Natural killer cell (primary cell): ENCODE measurements at regions of chr1 and their contacts with region 1.

Region 1: DNA sequence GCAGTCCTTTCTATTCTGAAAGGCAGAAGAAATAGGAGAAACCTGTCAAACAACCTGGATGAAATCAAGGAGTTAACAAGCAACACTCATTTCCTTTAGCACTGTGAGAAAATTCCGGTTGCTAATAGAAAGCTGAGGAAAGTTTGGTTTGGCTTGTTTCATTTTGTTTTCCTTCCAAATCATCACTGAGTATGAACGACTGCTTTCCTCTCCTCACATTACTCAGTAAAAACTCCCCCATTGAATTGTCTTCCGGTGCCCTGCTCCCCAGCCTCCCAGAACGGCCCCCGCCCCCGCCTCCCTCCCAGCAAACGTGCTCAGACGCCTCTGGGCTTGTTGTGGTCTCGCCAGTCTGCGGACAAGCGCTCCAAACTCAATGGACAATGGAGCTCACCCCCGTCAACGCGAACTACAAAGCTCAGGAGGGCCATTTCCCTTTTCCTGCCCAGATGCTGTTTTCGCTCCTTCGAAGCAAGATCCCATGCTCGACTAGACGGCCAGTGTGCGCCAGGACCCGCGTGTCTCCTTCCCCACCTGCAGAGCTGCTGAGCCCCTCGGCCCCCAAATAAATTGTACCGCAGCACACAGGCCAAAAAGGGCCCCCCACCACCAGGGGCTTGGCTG is 747 bp downstream of the STX6 start:
- DNase-seq: peak; percentile 41 to 77
- ATAC-seq: peak; percentile 42 to 55 (median 54)
- H3K4me3 ChIP-seq: peak overlapping the region; percentile 76
- H3K4me3 Mint-ChIP-seq: peak overlapping the region; percentile 97
- H3K27ac ChIP-seq: peak overlapping the region; percentile 59
- H3K27ac Mint-ChIP-seq: peak overlapping the region; percentile 98 to 99
- H3K4me1 ChIP-seq: peaks cover 7% of the 10 kb centered on the region
- H3K4me1 Mint-ChIP-seq: peaks cover 47 to 48% of the 10 kb centered on the region in 2 donors
- H3K27me3 ChIP-seq: no peaks in the 10 kb centered on the region
- H3K27me3 Mint-ChIP-seq: peaks cover 0 to 9% of the 10 kb centered on the region in 2 donors
- CTCF ChIP-seq: no peak

Region 2: GRCh38 chr1:180631766-180632325 is 390.1 kb before region 1 on chr1 and contains the start of gene XPR1:
- intact Hi-C with region 1: loop called (anchors 5 kb)
- DNase-seq: peak; percentile 88 to 100
- ATAC-seq: peak; percentile 95 to 100 (median 96)
- H3K4me3 ChIP-seq: peak within 1 kb of the TSS; percentile 95
- H3K4me3 Mint-ChIP-seq: no peak within 1 kb of the TSS
- H3K27ac ChIP-seq: peak within 1 kb of the TSS; percentile 92
- H3K27ac Mint-ChIP-seq: no peak within 1 kb of the TSS
- H3K4me1 ChIP-seq: peaks cover 3% of the 10 kb centered on the region
- H3K4me1 Mint-ChIP-seq: peaks cover 0 to 14% of the 10 kb centered on the region in 2 donors
- H3K27me3 ChIP-seq: no peaks in the 10 kb centered on the region
- H3K27me3 Mint-ChIP-seq: peaks cover 8 to 9% of the 10 kb centered on the region in 2 donors
- CTCF ChIP-seq: no peak
- total RNA-seq, gene XPR1: 14.8 to 18.2 (median 16.7) TPM

Region 3: GRCh38 chr1:181033799-181034451 is 12.0 kb after region 1 on chr1 and contains the start of gene MR1:
- intact Hi-C with region 1: loop called (anchors 1 kb)
- DNase-seq: peak in 1 of 2 donors; percentile 91
- ATAC-seq: peak; percentile 95 to 98 (median 97)
- H3K4me3 ChIP-seq: peak within 1 kb of the TSS; percentile 85
- H3K4me3 Mint-ChIP-seq: peak within 1 kb of the TSS; percentile 98
- H3K27ac ChIP-seq: peak within 1 kb of the TSS; percentile 96
- H3K27ac Mint-ChIP-seq: peak within 1 kb of the TSS; percentile 98 to 100
- H3K4me1 ChIP-seq: peaks cover 29% of the 10 kb centered on the region
- H3K4me1 Mint-ChIP-seq: peaks cover 60 to 66% of the 10 kb centered on the region in 2 donors
- H3K27me3 ChIP-seq: no peaks in the 10 kb centered on the region
- H3K27me3 Mint-ChIP-seq: no peaks in the 10 kb centered on the region
- CTCF ChIP-seq: no peak
- total RNA-seq, gene MR1: 27.8 to 35.3 (median 34.6) TPM

Region 4: DNA sequence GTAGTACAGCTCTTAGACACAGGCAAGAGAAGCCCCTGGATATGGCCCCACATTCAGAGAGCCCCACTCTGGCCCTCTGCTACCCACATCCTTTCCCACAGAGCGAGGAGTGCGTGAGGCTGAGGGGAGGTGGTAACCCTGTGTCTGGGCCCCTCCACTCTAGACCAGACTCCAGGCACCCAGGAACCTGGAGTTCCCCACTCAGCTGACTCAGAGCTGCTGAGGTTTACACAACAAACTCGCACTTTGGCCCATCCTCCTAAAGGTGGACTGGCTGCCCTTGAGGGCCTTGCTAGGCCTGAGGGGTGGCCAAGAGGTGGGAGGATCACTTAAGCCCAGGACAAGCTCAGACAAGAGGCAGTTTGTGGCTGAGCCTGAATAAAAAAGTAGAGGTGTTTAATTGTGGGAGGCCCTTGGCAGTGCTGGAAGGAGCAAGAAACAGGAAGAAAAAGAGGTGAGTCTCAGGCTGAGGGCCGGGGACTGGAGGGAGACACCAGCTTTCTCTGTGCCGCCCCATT is 22.6 kb after region 1 on chr1:
- intact Hi-C with region 1: no loop called
- DNase-seq: peak; percentile 69 to 73
- ATAC-seq: peak; percentile 90 to 97 (median 95)
- H3K4me3 ChIP-seq: no peak overlapping the region
- H3K4me3 Mint-ChIP-seq: peak overlapping the region; percentile 81
- H3K27ac ChIP-seq: peak overlapping the region; percentile 78
- H3K27ac Mint-ChIP-seq: peak overlapping the region; percentile 90 to 97
- H3K4me1 ChIP-seq: peaks cover 31% of the 10 kb centered on the region
- H3K4me1 Mint-ChIP-seq: peaks cover 45 to 46% of the 10 kb centered on the region in 2 donors
- H3K27me3 ChIP-seq: no peaks in the 10 kb centered on the region
- H3K27me3 Mint-ChIP-seq: no peaks in the 10 kb centered on the region
- CTCF ChIP-seq: no peak

Region 5: GRCh38 chr1:181062836-181063428 is 41.0 kb after region 1 on chr1:
- intact Hi-C with region 1: loop called (anchors 2 kb)
- DNase-seq: peak; percentile 37 to 58
- ATAC-seq: peak; percentile 91 to 93 (median 92)
- H3K4me3 ChIP-seq: peak overlapping the region; percentile 35
- H3K4me3 Mint-ChIP-seq: peak overlapping the region; percentile 87
- H3K27ac ChIP-seq: peak overlapping the region; percentile 92
- H3K27ac Mint-ChIP-seq: peak overlapping the region; percentile 91 to 98
- H3K4me1 ChIP-seq: peaks cover 17% of the 10 kb centered on the region
- H3K4me1 Mint-ChIP-seq: peaks cover 24 to 25% of the 10 kb centered on the region in 2 donors
- H3K27me3 ChIP-seq: no peaks in the 10 kb centered on the region
- H3K27me3 Mint-ChIP-seq: no peaks in the 10 kb centered on the region
- CTCF ChIP-seq: no peak

Region 6: DNA sequence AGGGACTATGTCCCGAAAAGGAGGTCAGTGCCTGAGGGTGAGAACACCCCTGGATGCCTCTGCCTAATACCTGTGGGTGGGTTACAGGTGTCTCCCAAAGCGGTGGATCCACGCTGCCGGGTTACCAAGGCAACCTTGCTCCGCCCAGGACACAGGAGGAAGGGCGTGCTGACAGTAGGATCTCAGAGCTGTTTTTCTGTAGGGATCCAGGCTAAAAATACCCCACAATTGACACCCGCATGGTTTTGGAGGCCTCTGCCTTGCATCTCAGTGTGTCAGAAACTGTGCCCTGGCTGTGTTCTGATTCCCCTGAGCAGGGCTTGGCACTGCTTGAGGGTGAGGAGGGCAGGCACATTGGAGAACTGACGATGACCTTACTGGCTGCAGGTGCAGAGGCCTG is 184.6 kb after region 1 on chr1:
- intact Hi-C with region 1: no loop called
- DNase-seq: no peak
- ATAC-seq: no peak
- H3K4me3 ChIP-seq: no peak overlapping the region
- H3K4me3 Mint-ChIP-seq: no peak overlapping the region
- H3K27ac ChIP-seq: no peak overlapping the region
- H3K27ac Mint-ChIP-seq: no peak overlapping the region
- H3K4me1 ChIP-seq: no peaks in the 10 kb centered on the region
- H3K4me1 Mint-ChIP-seq: no peaks in the 10 kb centered on the region
- H3K27me3 ChIP-seq: peaks cover 2% of the 10 kb centered on the region
- H3K27me3 Mint-ChIP-seq: peaks cover 11 to 16% of the 10 kb centered on the region in 2 donors
- CTCF ChIP-seq: no peak